B cell (primary cell): ENCODE measurements at regions of chr6 and their contacts with region 1.

Region 1: DNA sequence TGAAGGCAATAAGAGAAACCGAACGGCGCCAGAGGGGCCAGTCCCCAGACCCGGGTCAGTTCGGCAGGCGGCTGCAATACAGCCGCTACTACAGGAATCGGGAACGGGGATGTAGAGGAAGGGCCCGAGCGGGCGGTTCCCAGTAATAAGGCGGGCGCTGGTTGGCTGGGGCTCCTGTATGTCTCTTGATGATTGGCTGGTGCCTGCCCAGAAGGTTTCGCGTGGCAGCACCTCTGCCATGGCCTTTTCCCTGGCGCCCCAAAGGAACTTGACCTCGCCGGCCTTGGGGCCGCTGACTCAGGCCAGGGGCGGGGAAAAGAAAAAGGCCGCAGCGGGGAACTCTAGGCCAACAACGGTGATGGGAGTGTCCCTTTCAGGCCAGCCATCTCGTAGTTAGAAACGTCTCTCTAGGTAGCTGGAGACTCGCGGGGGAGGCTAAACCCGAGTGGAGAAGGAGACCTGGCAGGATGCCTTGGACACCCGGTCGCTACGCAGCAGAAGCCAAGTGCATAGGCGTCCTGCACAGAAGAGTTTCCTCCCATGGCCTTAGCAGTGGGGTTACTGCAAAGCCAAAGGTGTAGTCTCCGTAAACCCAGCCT is at the start of gene IBTK:
- DNase-seq: peak; percentile 92
- ATAC-seq: peak; percentile 88
- H3K4me3 ChIP-seq: peak within 1 kb of the TSS; percentile 59 to 96 (median 88)
- H3K4me3 Mint-ChIP-seq: peak within 1 kb of the TSS; percentile 99
- H3K27ac ChIP-seq: peak within 1 kb of the TSS; percentile 82 to 83
- H3K27ac Mint-ChIP-seq: peak within 1 kb of the TSS; percentile 95
- H3K4me1 ChIP-seq: peaks cover 15 to 20% of the 10 kb centered on the region in 2 donors
- H3K4me1 Mint-ChIP-seq: peaks cover 34% of the 10 kb centered on the region
- H3K27me3 ChIP-seq: no peaks in the 10 kb centered on the region
- H3K27me3 Mint-ChIP-seq: peaks cover under 1% of the 10 kb centered on the region
- CTCF ChIP-seq: no peak
- total RNA-seq, gene IBTK: 27.7 and 28.3 TPM in 2 replicates

Region 2: GRCh38 chr6:82095091-82095490 is 152.6 kb before region 1 on chr6:
- CTCF ChIA-PET with region 1: no interaction called
- POLR2A ChIA-PET with region 1: no interaction called
- intact Hi-C with region 1: no loop called
- DNase-seq: no peak
- ATAC-seq: no peak
- H3K4me3 ChIP-seq: no peak overlapping the region
- H3K4me3 Mint-ChIP-seq: no peak overlapping the region
- H3K27ac ChIP-seq: no peak overlapping the region
- H3K27ac Mint-ChIP-seq: no peak overlapping the region
- H3K4me1 ChIP-seq: no peaks in the 10 kb centered on the region
- H3K4me1 Mint-ChIP-seq: no peaks in the 10 kb centered on the region
- H3K27me3 ChIP-seq: no peaks in the 10 kb centered on the region
- H3K27me3 Mint-ChIP-seq: no peaks in the 10 kb centered on the region
- CTCF ChIP-seq: no peak

Region 3: DNA sequence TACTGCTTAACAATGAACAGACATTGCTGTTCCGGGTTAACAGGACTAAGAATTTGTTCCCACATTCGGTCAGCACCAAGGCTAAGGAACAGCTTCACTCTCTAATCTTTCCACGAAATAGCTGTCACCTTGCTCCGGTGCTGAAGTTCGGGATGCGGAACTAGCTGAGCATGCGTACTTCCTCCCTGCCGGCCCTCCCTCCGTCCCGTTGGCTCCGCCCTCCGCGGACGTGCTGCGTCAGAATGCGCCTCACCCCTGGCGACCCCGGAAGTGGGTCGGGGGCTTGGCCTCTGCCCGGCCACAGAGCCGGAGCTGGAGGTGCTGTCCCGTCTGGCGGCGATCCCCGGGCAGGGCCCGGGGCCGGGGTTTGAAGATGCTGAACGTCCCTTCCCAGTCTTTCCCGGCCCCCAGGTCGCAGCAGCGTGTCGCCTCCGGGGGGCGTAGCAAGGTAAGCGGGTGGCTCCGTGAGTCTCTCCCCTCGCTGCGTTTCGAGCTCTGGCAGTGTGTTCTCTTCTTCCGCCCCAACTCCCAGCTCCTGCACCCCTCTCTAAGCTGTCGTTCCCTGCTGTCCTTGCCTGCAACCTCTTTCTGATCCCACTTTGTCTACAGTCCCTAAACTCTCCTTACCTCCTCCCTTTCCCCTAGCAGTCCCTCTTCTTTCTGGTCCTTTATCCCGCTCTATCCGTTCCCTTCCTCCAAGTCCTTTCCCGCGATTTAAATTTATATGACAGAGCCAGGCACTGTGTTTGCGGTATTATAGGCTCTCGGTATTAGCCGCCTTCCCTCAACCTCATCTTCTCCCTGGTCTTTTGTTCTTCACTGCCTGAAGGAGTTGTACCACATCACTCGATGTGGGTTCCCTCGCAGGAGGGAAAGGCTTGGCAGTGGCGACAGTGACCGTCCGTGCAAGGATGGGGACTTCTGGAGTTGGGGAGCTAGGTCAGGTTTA is 1612.0 kb after region 1 on chr6 and contains the start of gene CYB5R4:
- CTCF ChIA-PET with region 1: no interaction called
- POLR2A ChIA-PET with region 1: no interaction called
- intact Hi-C with region 1: loop called (anchors 2 kb)
- DNase-seq: peak; percentile 95
- ATAC-seq: peak; percentile 97
- H3K4me3 ChIP-seq: peak within 1 kb of the TSS; percentile 85 to 98 (median 94)
- H3K4me3 Mint-ChIP-seq: peak within 1 kb of the TSS; percentile 99
- H3K27ac ChIP-seq: peak within 1 kb of the TSS; percentile 83 to 87
- H3K27ac Mint-ChIP-seq: peak within 1 kb of the TSS; percentile 95
- H3K4me1 ChIP-seq: peaks cover 25% of the 10 kb centered on the region in 2 donors
- H3K4me1 Mint-ChIP-seq: peaks cover 46% of the 10 kb centered on the region
- H3K27me3 ChIP-seq: peaks cover 0 to 10% (median 7%) of the 10 kb centered on the region in 4 experiments
- H3K27me3 Mint-ChIP-seq: peaks cover 16% of the 10 kb centered on the region
- CTCF ChIP-seq: peak; percentile 47
- total RNA-seq, gene CYB5R4: 39.6 and 43.7 TPM in 2 replicates